ENCODE measurements at regions of chr3 and their contacts with region 1.

Region 1: GRCh38 chr3:112043603-112044201 is 9.2 kb downstream of the TMPRSS7 start:
- DNase-seq: peak; percentile 62
- ATAC-seq: peak; percentile 95
- H3K4me3 ChIP-seq: no peak overlapping the region
- H3K27ac ChIP-seq: no peak overlapping the region
- H3K4me1 ChIP-seq: peaks cover 16% of the 10 kb centered on the region
- H3K27me3 ChIP-seq: peaks cover 0 to 17% of the 10 kb centered on the region in 2 experiments; a peak in 2 of 5 replicates
- CTCF ChIP-seq: peak; percentile 75
- EP300 ChIP-seq: no peak
- POLR2A ChIP-seq: no peak
- RAD21 ChIP-seq: peak; percentile 33; the same call in 1 of the 2 replicates

Region 2: DNA sequence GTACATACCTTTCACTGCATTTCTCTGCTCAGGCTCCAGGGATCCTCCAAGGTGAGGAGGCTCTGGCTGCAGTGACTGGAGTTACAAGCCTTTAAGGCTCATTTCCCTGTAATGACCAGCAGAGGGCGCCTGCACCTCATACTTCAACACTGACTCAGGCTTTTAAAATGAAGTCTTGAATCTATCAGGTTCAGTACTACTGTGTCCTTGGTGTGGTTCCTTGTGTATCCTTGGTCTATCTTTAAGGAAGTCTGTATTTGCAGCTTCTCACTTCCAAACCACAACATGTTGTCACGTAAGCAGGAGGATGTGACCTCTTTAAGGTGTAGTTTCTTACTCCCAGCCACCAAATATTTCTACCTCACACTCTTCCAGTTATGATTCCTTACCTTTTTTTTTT is 326.1 kb before region 1 on chr3:
- CTCF ChIA-PET with region 1: no interaction called
- POLR2A ChIA-PET with region 1: no interaction called
- in situ Hi-C with region 1: no loop called
- intact Hi-C with region 1: loop called (anchors 5 kb)
- DNase-seq: peak; percentile 78
- ATAC-seq: peak; percentile 96
- H3K4me3 ChIP-seq: no peak overlapping the region
- H3K27ac ChIP-seq: no peak overlapping the region
- H3K4me1 ChIP-seq: no peaks in the 10 kb centered on the region
- H3K27me3 ChIP-seq: no peaks in the 10 kb centered on the region
- CTCF ChIP-seq: peak; percentile 94
- EP300 ChIP-seq: no peak
- POLR2A ChIP-seq: no peak
- RAD21 ChIP-seq: peak; percentile 90

Region 3: DNA sequence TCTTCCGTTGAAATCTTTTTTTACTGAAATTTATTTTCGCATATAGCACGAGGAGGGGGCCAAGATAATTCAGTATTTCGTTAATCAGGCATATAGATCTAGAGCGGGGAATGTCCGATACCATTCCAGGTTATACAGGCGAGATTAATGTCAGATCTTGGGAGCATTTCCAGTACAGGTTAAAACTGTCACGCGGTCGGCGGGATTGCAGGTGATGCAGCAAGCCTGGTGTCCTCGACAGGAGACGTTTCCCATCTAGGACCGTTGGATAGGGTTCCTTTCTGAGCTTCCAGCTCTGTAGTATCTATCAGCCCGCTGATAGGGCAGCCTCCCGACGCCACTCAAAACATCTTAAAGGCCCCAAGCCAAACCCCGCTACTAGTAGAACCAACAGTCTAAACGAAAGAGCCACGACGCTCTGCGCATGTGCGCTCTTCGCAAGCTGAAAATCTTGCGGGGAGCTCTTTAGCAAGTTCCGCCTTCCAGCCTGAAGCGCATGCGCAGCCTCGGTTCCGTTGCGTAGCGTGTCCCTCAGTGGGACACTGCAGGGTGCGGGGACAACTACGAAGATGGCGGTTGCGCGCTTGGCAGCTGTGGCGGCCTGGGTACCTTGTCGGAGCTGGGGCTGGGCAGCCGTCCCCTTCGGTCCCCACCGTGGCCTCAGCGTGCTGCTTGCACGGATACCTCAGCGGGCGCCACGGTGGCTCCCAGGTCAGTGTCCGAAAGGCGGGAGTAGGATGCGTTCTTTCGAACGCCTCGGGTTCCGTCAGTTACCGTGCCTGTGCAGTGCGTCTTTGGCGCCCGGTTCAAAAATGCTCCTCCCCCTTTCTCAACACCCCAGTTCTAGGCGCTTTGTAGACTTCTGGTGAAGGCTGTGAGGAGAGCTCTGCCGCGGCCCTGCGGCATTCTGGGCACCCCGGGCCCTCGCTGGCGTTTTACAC is 64.9 kb before region 1 on chr3 and contains the start of gene ABHD10:
- CTCF ChIA-PET with region 1: no interaction called
- POLR2A ChIA-PET with region 1: no interaction called
- in situ Hi-C with region 1: no loop called
- intact Hi-C with region 1: no loop called
- DNase-seq: peak; percentile 95
- ATAC-seq: peak; percentile 97
- H3K4me3 ChIP-seq: peak within 1 kb of the TSS; percentile 79 to 95 (median 86)
- H3K27ac ChIP-seq: peak within 1 kb of the TSS; percentile 80
- H3K4me1 ChIP-seq: peaks cover 23% of the 10 kb centered on the region
- H3K27me3 ChIP-seq: no peaks in the 10 kb centered on the region
- CTCF ChIP-seq: no peak
- EP300 ChIP-seq: no peak; a peak in 1 of 4 replicates
- POLR2A ChIP-seq: peak; percentile 97 to 99
- RAD21 ChIP-seq: no peak
- total RNA-seq, gene ABHD10: 50.2 and 84.8 TPM in 2 replicates

Region 4: DNA sequence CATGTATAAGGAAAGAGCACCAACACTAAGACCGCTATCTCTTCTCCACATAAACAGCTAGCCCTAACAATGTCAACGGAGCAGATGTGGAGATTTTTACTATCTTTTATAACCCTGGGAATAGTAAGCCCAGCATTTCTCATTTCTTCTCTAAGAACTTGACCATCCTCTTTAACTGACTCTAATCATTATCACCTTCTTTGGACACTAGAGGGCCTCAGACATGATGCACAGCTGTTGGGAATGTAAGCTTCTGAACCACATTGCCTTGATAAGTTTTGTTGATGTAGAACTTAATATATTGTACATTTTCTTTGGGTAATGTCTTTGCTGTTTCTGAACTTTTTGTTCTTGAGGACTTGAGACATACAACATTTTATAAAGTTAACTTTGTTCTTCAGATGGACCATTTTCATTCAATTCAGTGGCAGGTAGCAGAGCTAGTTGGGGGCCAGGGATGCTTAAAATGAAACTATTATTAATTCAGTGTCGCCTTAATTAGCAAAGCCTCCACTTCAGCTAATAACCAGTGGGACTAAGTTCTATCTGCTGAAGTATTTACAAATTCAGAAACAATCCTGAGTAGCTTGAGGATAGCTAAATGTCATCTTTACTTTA is 54.5 kb before region 1 on chr3:
- CTCF ChIA-PET with region 1: interaction called, 7 read pairs
- POLR2A ChIA-PET with region 1: no interaction called
- in situ Hi-C with region 1: no loop called
- intact Hi-C with region 1: loop called (anchors 1 kb)
- DNase-seq: peak; percentile 53
- ATAC-seq: peak; percentile 96
- H3K4me3 ChIP-seq: no peak overlapping the region
- H3K27ac ChIP-seq: no peak overlapping the region
- H3K4me1 ChIP-seq: no peaks in the 10 kb centered on the region
- H3K27me3 ChIP-seq: no peaks in the 10 kb centered on the region
- CTCF ChIP-seq: peak; percentile 72
- EP300 ChIP-seq: no peak
- POLR2A ChIP-seq: no peak
- RAD21 ChIP-seq: peak; percentile 20; the same call in 1 of the 2 replicates

Region 5: DNA sequence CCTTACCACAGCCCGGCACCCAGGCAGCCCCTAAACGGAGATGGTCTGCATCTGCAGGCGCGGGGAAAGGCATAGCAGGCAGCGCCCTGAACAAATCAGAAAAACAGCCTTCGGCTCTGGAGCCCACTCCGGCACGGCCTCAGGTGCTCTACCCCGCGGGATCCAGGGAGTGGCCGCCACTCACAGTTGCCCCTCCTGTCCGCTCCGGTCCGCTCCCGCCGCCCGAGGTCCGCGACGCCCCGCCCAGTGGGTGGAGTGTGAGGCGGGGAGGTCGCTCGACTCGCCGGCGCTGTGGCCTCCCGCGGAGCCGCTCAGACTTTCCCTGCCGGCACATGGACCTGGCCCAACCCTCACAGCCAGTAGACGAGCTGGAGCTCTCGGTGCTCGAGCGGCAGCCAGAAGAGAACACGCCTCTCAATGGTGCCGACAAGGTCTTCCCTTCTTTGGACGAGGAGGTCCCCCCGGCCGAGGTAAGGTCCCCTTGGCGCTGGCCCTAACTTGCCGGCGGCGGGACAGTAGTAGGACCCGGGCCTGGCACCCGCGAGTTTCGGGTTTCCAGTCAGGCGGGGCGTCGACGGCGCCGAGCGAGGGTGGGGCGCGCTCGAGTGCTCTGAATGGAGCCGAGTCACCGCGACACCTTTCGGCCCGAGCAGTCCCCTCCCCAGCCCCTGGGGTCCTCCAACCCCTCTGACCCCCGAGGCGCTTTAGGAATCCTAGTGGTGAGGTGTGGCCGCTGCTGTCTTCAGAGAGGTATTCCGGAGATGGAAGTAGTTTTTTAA is 42.6 kb after region 1 on chr3 and contains the start of gene C3orf52:
- CTCF ChIA-PET with region 1: no interaction called
- POLR2A ChIA-PET with region 1: no interaction called
- in situ Hi-C with region 1: no loop called
- intact Hi-C with region 1: loop called (anchors 1 kb)
- DNase-seq: peak; percentile 56
- ATAC-seq: peak; percentile 97
- H3K4me3 ChIP-seq: peak within 1 kb of the TSS; percentile 11 to 64 (median 47); a peak in 5 of 6 replicates
- H3K27ac ChIP-seq: no peak within 1 kb of the TSS
- H3K4me1 ChIP-seq: peaks cover 39% of the 10 kb centered on the region
- H3K27me3 ChIP-seq: no peaks in the 10 kb centered on the region; a peak in 2 of 5 replicates
- CTCF ChIP-seq: 0 out of 2 replicates have a peak, but pooled peaks have one; percentile 12
- EP300 ChIP-seq: no peak
- POLR2A ChIP-seq: no peak
- RAD21 ChIP-seq: no peak
- total RNA-seq, gene C3orf52: 1.0 and 1.2 TPM in 2 replicates

Region 6: GRCh38 chr3:112357930-112358780 is 314.5 kb after region 1 on chr3:
- CTCF ChIA-PET with region 1: no interaction called
- POLR2A ChIA-PET with region 1: no interaction called
- in situ Hi-C with region 1: no loop called
- intact Hi-C with region 1: no loop called
- DNase-seq: no peak
- ATAC-seq: no peak
- H3K4me3 ChIP-seq: no peak overlapping the region
- H3K27ac ChIP-seq: no peak overlapping the region
- H3K4me1 ChIP-seq: no peaks in the 10 kb centered on the region
- H3K27me3 ChIP-seq: peaks cover 0 to 4% of the 10 kb centered on the region in 2 experiments; a peak in 1 of 5 replicates
- CTCF ChIP-seq: no peak
- EP300 ChIP-seq: no peak
- POLR2A ChIP-seq: no peak
- RAD21 ChIP-seq: no peak

Measured in HepG2 (cell line).